ENCODE measurements at regions of chr3 and their contacts with region 1.

Region 1: DNA sequence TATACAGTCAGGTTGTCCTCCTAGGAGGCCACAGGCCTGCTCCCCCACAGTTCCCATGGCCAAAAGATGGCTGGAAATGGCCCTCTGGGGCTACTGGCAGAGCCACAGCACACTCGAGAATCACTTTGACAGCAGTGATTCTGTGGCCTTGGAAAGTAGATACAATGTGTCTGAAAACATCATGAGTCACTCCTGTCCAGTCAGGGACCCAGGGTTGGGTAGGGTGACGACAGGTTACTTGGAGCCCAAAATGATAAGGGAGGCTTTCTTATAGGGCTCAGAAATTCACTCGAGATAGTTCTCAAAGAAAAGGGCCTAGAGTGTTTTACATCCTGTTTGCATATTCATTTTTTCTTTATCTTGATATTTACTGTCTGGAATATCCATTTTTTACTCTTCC is 24.3 kb downstream of the MRPS25 start:
- DNase-seq: no peak
- H3K4me3 Mint-ChIP-seq: no peak overlapping the region
- H3K27ac Mint-ChIP-seq: peak overlapping the region; percentile 57
- H3K4me1 Mint-ChIP-seq: peaks cover 29% of the 10 kb centered on the region
- H3K27me3 Mint-ChIP-seq: no peaks in the 10 kb centered on the region

Region 2: GRCh38 chr3:14933820-14934425 is 106.9 kb before region 1 on chr3:
- CTCF ChIA-PET with region 1: no interaction called
- intact Hi-C with region 1: no loop called
- DNase-seq: no peak
- H3K4me3 Mint-ChIP-seq: no peak overlapping the region
- H3K27ac Mint-ChIP-seq: no peak overlapping the region
- H3K4me1 Mint-ChIP-seq: no peaks in the 10 kb centered on the region
- H3K27me3 Mint-ChIP-seq: no peaks in the 10 kb centered on the region

Region 3: GRCh38 chr3:14997941-14998340 is 42.9 kb before region 1 on chr3:
- CTCF ChIA-PET with region 1: no interaction called
- intact Hi-C with region 1: loop called (anchors 1 kb)
- DNase-seq: no peak
- H3K4me3 Mint-ChIP-seq: no peak overlapping the region
- H3K27ac Mint-ChIP-seq: no peak overlapping the region
- H3K4me1 Mint-ChIP-seq: peaks cover 5% of the 10 kb centered on the region
- H3K27me3 Mint-ChIP-seq: no peaks in the 10 kb centered on the region